ENCODE measurements at regions of chr20 and their contacts with region 1.

Region 1: DNA sequence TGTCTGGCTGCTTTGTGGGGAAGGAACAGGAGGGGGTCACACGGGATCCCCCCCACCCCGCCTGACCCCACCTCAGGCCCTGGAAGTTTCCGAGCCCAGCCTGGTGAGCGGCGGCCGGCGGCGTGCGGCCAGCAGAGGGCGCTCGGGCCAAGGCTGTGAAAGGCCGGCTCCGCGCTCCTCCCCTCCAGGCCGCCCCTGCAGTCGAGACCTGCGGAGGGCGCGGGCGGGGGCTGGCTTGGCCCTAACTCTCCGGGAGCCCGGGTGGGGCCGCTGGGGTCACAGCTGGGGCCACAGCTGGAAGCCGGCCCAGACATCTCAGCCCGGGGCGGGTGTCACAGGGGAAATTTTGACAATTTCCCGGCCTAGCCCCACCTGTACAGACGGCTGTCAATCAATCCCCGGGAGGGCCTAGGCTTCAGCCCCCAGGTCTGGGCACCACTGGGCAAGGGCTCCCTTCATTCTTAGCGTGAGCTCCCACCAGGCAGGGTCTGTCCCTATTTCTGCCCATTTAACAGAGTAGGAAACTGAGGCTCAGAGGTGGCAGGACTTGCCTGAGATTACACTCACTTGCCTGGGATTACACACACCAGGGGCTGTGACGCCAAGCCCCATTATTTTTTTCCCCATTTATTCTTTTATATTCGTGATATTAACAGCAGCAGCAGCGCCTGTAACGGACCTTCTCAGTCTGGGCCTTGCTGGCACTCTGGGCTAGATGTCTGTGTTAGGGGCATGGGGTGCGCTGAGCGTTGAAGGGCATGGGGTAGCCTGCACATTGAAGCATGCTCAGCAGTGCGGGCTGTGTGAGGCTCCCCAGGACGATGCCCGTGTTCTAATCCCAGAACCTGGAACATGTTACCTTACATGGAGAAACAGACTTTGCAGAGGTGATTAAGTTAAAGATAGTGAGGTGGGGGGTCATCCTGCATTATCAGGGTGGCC is 23.0 kb downstream of the ZBP1 start:
- DNase-seq: peak; percentile 32 to 72 (median 67)
- H3K4me3 ChIP-seq: no peak overlapping the region
- H3K27ac ChIP-seq: no peak overlapping the region
- H3K4me1 ChIP-seq: no peaks in the 10 kb centered on the region
- H3K27me3 ChIP-seq: no peaks in the 10 kb centered on the region
- CTCF ChIP-seq: peak; percentile 63 to 93 (median 86)
- POLR2A ChIP-seq: no peak

Region 2: DNA sequence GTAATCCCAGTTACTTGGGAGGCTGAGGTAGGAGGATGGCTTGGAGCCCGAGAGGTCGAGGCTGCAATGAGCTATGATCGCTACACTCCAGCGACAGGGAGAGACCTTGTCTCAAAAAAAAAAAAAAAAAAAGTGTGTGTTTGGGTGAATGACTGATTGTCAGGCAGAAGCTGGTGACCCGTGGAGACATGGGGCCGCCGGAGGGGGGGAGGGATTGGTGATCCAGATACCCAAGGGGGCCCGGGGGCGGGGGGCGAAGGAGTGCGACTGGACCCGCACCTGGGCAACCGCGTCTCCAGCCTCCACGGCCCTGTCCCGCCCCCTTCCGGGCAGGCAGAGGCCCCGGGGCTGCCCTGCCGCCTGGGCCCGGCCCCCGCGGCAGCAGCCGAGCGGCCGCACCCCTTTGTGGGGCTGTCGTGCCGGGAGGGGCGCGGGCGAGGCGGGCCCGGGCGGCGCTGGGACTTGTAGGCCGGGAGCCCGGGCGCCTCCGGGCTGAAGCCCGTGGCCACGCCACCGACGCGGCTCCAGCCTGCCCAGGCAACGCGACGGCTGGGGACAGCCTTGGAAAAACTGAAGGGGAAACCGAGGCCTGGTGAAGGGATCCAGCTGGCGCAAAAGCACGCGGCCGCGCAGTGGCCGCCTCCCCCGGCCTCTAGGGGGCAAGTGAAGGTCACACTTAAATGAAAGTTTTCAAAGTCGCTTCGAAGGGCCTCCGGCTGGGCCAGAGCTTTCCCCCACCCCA is 208.1 kb before region 1 on chr20:
- intact Hi-C with region 1: loop called in 1 of 2 experiments (anchors 10 kb)
- DNase-seq: peak; percentile 78 to 87 (median 84)
- H3K4me3 ChIP-seq: peak overlapping the region in 2 of 4 donors; percentile 22 to 60
- H3K27ac ChIP-seq: peak overlapping the region in 3 of 5 donors; percentile 31 to 80 (median 33)
- H3K4me1 ChIP-seq: peaks cover 16 to 29% of the 10 kb centered on the region in 2 donors
- H3K27me3 ChIP-seq: no peaks in the 10 kb centered on the region
- CTCF ChIP-seq: peak in 4 of 6 experiments; percentile 8 to 23 (median 12)
- POLR2A ChIP-seq: peak in 1 of 2 donors; percentile 22

Region 3: DNA sequence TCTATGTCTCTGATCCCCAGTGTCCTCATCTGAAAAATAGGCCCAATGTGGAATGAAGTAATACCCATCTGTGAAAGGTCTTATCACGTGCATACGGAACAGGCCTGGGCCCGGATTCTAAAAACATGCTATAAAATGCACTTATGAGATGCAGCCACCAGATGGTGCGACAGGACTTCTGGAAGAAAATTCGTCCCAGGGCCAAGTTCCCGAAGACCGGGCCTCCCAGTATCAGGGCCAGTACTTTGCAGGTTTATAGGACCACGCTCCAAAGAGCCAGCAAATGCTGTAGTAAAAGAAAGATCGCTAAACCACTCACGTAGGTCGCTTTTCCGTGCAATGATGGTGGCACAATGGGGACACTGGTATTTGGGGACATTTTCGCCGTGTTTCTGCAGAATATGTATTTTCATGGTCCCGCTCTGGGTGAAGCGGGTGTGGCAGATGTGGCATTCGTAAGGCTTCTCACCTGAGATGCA is 83.0 kb before region 1 on chr20:
- intact Hi-C with region 1: loop called (anchors 2 to 5 kb)
- DNase-seq: peak; percentile 54 to 88 (median 81)
- H3K4me3 ChIP-seq: no peak overlapping the region
- H3K27ac ChIP-seq: no peak overlapping the region
- H3K4me1 ChIP-seq: no peaks in the 10 kb centered on the region
- H3K27me3 ChIP-seq: peaks cover 6% of the 10 kb centered on the region
- CTCF ChIP-seq: peak; percentile 45 to 89 (median 82)
- POLR2A ChIP-seq: no peak

Region 4: DNA sequence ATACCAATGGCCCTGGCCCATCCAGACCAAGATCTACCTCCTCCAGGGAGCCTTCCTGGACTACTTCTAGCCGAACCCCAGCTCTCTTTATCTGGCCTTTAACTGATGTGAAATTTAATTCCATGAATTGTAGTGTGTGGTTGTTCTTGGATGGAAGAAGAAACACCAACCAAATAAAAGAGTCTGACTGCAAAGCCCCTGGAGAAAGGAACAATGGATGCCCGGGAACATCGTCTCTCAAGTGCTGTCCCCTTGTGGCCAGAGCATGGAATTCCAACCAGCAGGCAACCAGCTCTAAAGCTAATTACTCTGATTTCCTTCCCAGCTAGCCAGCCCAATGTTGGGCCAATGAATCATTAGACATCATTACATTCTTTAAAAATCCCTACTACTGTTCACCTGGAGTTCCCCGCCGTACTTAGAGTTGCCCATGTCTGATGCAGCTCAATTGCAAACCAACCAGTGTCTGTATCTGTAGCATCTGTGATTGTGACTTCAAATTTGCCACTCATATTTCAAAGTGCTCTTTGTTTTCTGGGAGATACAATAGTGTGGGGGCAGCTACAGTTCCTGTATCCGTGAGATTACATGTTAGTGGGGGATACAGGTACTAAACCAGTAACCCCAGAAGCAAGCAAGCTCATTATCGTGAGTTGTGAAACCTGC is 490.1 kb after region 1 on chr20:
- intact Hi-C with region 1: loop called in 1 of 2 experiments (anchors 5 kb)
- DNase-seq: peak in 5 of 7 donors; percentile 18 to 59 (median 29)
- H3K4me3 ChIP-seq: no peak overlapping the region
- H3K27ac ChIP-seq: no peak overlapping the region
- H3K4me1 ChIP-seq: no peaks in the 10 kb centered on the region
- H3K27me3 ChIP-seq: no peaks in the 10 kb centered on the region
- CTCF ChIP-seq: peak; percentile 61 to 82 (median 74)
- POLR2A ChIP-seq: no peak

Region 5: GRCh38 chr20:58209652-58210397 is 612.6 kb after region 1 on chr20:
- intact Hi-C with region 1: loop called (anchors 2 to 5 kb)
- DNase-seq: peak; percentile 63 to 91 (median 84)
- H3K4me3 ChIP-seq: no peak overlapping the region
- H3K27ac ChIP-seq: no peak overlapping the region
- H3K4me1 ChIP-seq: no peaks in the 10 kb centered on the region
- H3K27me3 ChIP-seq: no peaks in the 10 kb centered on the region
- CTCF ChIP-seq: peak; percentile 100
- POLR2A ChIP-seq: no peak

Measured in adrenal gland (tissue), 19 donors.